K562 (cell line): ENCODE measurements at regions of chrX and their contacts with region 1.

Region 1: GRCh38 chrX:68234171-68234910 is 199.0 kb downstream of the OPHN1 start:
- DNase-seq: no peak
- ATAC-seq: no peak
- H3K4me3 ChIP-seq: no peak overlapping the region
- H3K27ac ChIP-seq: no peak overlapping the region
- H3K4me1 ChIP-seq: no peaks in the 10 kb centered on the region
- H3K27me3 ChIP-seq: no peaks in the 10 kb centered on the region
- CTCF ChIP-seq: no peak
- EP300 ChIP-seq: no peak
- POLR2A ChIP-seq: no peak
- RAD21 ChIP-seq: no peak

Region 2: DNA sequence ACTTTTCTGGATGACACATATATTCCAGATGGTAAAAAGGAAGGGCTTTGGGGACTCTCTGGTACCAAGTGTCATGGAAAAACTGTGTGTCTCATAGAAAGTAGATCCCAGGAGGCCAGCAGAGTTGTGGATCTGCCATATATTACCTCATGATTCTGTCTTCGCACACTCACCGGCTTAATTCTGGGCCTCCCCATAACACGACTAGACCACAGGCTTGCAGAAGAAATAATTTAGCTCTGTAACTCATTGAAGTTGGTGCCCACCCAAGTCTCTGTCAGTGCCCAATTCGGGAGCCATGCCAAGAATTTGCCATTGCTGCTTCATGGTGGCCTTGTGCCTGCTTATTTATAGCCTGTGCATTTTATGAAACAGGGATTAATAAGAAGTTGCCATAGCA is 586.0 kb before region 1 on chrX:
- CTCF ChIA-PET with region 1: no interaction called
- POLR2A ChIA-PET with region 1: no interaction called
- in situ Hi-C with region 1: no loop called
- intact Hi-C with region 1: no loop called
- DNase-seq: no peak
- ATAC-seq: no peak
- H3K4me3 ChIP-seq: no peak overlapping the region
- H3K27ac ChIP-seq: no peak overlapping the region
- H3K4me1 ChIP-seq: no peaks in the 10 kb centered on the region
- H3K27me3 ChIP-seq: no peaks in the 10 kb centered on the region
- CTCF ChIP-seq: no peak
- EP300 ChIP-seq: no peak
- POLR2A ChIP-seq: no peak
- RAD21 ChIP-seq: no peak

Region 3: GRCh38 chrX:68146054-68146453 is 88.3 kb before region 1 on chrX:
- CTCF ChIA-PET with region 1: no interaction called
- POLR2A ChIA-PET with region 1: no interaction called
- in situ Hi-C with region 1: no loop called
- intact Hi-C with region 1: no loop called
- DNase-seq: peak in 2 of 4 experiments; percentile 21 to 34
- ATAC-seq: peak; percentile 93
- H3K4me3 ChIP-seq: no peak overlapping the region
- H3K27ac ChIP-seq: no peak overlapping the region
- H3K4me1 ChIP-seq: no peaks in the 10 kb centered on the region
- H3K27me3 ChIP-seq: no peaks in the 10 kb centered on the region
- CTCF ChIP-seq: peak; percentile 17 to 58 (median 40); a peak in 4 of 6 replicates
- EP300 ChIP-seq: no peak
- POLR2A ChIP-seq: no peak
- RAD21 ChIP-seq: peak; percentile 17 to 55; a peak in 3 of 4 replicates

Region 4: GRCh38 chrX:68462653-68463052 is 228.3 kb after region 1 on chrX:
- CTCF ChIA-PET with region 1: no interaction called
- POLR2A ChIA-PET with region 1: no interaction called
- in situ Hi-C with region 1: no loop called
- intact Hi-C with region 1: loop called (anchors 5 kb)
- DNase-seq: peak in 3 of 4 experiments; percentile 8 to 67 (median 10)
- ATAC-seq: peak; percentile 92
- H3K4me3 ChIP-seq: no peak overlapping the region
- H3K27ac ChIP-seq: peak overlapping the region; percentile 47; the same call in 2 of the 3 replicates
- H3K4me1 ChIP-seq: no peaks in the 10 kb centered on the region
- H3K27me3 ChIP-seq: no peaks in the 10 kb centered on the region; a peak in 1 of 5 replicates
- CTCF ChIP-seq: peak; percentile 59 to 73 (median 71)
- EP300 ChIP-seq: no peak
- POLR2A ChIP-seq: no peak
- RAD21 ChIP-seq: peak; percentile 70 to 87